Activated CD8-positive, alpha-beta memory T cell treated with anti-CD3 and anti-CD28 coated beads, Interleukin-2, amount 10 ng/mL, durations not matched to agents 7 days and 5 days (primary cell): ENCODE measurements at regions of chr2 and their contacts with region 1.

Region 1: GRCh38 chr2:234425619-234426603 is 71.0 kb downstream of the ARL4C start:
- DNase-seq: peak; percentile 92
- ATAC-seq: peak; percentile 82
- H3K4me3 Mint-ChIP-seq: peak overlapping the region; percentile 41
- H3K27ac Mint-ChIP-seq: peak overlapping the region; percentile 97
- H3K4me1 Mint-ChIP-seq: peaks cover 80% of the 10 kb centered on the region
- H3K27me3 Mint-ChIP-seq: no peaks in the 10 kb centered on the region

Region 2: GRCh38 chr2:234411793-234412192 is 14.1 kb before region 1 on chr2:
- CTCF ChIA-PET with region 1: interaction called, 12 read pairs
- DNase-seq: no peak
- ATAC-seq: no peak
- H3K4me3 Mint-ChIP-seq: no peak overlapping the region
- H3K27ac Mint-ChIP-seq: no peak overlapping the region
- H3K4me1 Mint-ChIP-seq: peaks cover 18% of the 10 kb centered on the region
- H3K27me3 Mint-ChIP-seq: no peaks in the 10 kb centered on the region

Region 3: GRCh38 chr2:234446404-234447076 is 20.6 kb after region 1 on chr2:
- CTCF ChIA-PET with region 1: interaction called, 17 read pairs
- DNase-seq: peak; percentile 96
- ATAC-seq: peak; percentile 95
- H3K4me3 Mint-ChIP-seq: peak overlapping the region; percentile 44
- H3K27ac Mint-ChIP-seq: peak overlapping the region; percentile 97
- H3K4me1 Mint-ChIP-seq: peaks cover 84% of the 10 kb centered on the region
- H3K27me3 Mint-ChIP-seq: no peaks in the 10 kb centered on the region

Region 4: DNA sequence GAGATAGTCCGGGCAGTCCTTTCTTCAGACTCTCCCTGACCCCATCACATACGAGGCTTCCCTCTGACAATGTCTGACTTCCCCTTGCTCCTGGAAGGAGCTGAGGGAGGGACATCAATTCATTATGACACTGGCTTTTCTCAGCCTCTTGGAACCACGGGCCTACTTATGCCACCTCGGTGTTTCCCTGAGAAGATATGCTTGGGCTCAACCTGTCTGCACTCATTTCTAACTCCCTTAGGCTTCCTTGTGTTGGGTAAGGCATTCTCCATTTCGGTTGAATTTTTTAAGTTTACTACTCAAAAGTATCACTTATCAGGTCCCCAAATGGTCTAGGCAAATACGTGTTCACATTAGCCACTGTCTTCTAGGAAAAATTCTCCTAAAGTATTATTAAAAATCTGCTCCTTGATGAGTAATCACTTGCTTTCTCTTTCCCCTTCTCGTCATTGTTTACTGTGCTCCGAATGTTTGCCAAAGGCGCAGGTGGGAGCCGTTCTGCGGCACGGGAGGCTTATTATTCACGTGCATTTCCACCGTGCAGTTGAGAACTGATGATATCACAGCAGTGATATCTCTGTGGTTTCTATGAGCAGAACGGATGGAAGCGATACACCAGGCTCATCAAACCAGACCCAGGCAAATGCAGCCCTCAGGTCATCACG is 37.8 kb after region 1 on chr2:
- CTCF ChIA-PET with region 1: no interaction called
- DNase-seq: peak; percentile 80
- ATAC-seq: peak; percentile 75
- H3K4me3 Mint-ChIP-seq: peak overlapping the region; percentile 70
- H3K27ac Mint-ChIP-seq: peak overlapping the region; percentile 85
- H3K4me1 Mint-ChIP-seq: peaks cover 53% of the 10 kb centered on the region
- H3K27me3 Mint-ChIP-seq: no peaks in the 10 kb centered on the region